ENCODE measurements at regions of chr10 and their contacts with region 1.

Region 1: DNA sequence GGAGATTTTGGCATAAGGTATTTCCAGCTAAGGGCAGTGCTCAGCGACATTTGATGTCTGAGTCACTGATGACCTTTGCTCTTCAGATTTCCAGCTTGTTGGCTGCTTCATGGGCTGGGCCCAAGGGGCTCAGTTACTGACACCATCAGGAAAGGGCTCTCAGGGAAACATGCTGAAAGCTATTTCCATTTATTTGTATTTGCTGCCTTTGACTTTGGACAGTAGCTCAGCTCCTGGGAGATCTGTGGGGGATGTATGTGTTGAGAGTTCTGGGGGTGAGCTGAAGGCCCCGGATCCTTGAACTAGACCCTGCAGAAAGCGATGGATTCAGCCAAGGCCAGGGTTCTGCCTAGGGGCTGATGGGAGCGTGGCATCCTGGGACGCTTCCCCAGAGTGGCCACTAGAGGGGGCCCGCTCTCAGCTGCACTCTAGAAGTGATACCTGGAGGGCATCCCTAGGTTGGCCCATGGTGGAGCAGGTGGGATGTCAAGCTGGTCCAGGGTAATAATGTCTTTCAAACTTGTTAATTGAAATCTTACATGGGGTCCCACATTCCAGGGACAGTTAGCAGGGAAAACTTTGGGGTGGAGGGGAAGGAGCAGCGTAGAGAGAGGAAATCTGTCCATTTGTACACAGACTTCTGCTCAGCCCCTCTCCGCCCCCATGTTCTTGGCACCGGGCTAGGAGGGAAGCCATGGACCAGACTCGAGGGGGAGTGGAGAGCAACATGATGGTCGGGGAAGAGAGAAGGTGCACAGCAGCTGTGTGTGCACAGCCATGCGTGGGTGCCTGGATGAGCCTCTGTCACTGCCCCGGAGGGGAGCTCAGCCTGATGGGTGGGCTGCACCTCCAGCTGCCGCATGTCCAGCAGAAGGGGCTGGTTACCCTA is 3.0 kb upstream of the BTBD16 start:
- DNase-seq: peak; percentile 78
- H3K27ac ChIP-seq: peak overlapping the region; percentile 24; the same call in 1 of the 2 replicates
- CTCF ChIP-seq: peak; percentile 95

Region 2: DNA sequence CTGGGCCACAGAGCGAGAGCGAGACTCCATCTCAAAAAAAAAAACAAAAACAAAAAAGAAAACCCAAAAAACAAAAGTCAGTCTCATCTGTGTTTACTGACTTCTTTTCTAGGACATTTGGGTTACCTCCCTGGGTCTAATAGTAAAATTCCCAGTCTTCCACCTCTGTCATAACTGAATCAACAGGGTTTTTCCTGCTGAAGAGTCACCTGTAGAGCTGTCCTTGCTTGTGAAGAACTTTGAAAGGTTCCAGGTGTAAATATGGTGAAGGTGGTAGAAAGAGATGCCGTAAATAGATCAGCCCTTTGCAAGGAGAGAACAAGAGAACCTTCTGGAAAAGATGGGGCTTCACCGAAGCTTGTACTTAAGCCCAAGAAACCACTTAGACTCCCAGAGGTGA is 109.7 kb before region 1 on chr10:
- CTCF ChIA-PET with region 1: no interaction called
- POLR2A ChIA-PET with region 1: no interaction called
- DNase-seq: no peak
- H3K27ac ChIP-seq: no peak overlapping the region
- CTCF ChIP-seq: no peak

Region 3: DNA sequence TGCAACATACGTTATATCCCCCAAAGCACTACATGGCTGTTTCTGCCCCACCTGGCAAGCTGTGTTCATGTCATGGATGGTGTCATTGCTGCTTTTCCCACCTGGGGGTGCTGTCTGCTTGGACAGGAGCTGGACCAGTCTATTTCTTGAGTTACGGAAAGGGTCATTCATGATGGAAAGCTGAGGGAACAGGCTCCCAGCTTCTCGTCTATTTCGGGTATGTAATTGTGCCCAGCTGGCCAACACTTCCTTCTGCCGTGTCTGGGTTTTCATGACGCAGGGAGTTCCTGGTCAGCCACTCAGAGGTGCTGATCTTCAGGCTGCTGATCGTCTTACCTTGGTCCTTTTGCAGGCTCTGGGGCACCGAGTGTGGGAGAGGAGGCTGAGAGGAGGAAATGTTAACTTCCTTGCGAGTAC is 11.6 kb after region 1 on chr10:
- CTCF ChIA-PET with region 1: interaction called, 26 read pairs
- POLR2A ChIA-PET with region 1: no interaction called
- DNase-seq: peak; percentile 51
- H3K27ac ChIP-seq: no peak overlapping the region
- CTCF ChIP-seq: peak; percentile 58

Region 4: DNA sequence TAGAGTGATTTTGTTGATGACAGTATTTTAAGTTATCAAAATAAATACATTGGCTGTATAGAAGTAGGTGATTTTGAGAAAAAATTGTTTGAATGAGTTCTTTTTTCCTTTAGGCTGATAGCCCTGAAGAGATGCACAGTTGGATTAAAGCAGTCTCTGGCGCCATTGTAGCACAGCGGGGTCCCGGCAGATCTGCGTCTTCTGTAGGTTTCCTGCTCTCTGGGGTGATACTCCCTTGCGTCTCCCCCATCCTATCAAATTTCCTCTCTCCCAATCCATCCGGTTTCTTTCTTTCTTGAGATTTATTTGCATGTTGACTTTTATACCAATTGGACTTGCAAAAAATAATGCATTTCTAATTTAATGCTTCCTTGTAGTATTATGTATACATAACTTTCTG is 158.7 kb after region 1 on chr10:
- CTCF ChIA-PET with region 1: no interaction called
- POLR2A ChIA-PET with region 1: no interaction called
- DNase-seq: no peak
- H3K27ac ChIP-seq: no peak overlapping the region; the same call in 1 of the 2 replicates
- CTCF ChIP-seq: no peak

Region 5: GRCh38 chr10:122495406-122496340 is 227.6 kb after region 1 on chr10:
- CTCF ChIA-PET with region 1: no interaction called
- POLR2A ChIA-PET with region 1: no interaction called
- DNase-seq: no peak
- H3K27ac ChIP-seq: peak overlapping the region; percentile 99
- CTCF ChIP-seq: no peak

Region 6: DNA sequence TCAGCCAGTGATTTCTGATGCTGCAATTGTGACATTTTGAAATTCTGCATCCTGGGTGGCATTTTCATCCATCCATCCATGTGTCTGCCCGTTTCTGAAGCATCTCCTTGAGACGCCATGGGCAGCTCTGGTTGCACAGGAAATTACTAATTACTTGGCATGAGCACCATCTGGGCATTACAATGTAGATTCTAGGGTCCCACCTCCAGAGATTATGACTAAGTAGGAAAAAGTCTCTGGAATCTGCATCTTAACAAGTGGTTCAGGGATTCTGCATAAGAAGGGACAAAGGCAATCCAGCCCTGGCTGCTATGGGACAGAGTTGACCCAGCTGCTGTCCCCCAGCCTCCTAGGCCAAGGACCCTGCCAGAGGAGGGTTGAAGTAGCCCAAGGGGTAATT is 512.3 kb after region 1 on chr10:
- CTCF ChIA-PET with region 1: no interaction called
- POLR2A ChIA-PET with region 1: no interaction called
- DNase-seq: peak; percentile 57
- H3K27ac ChIP-seq: no peak overlapping the region
- CTCF ChIP-seq: no peak

Measured in RWPE1 (cell line).